Heart left ventricle (tissue), 16 donors: ENCODE measurements at regions of chr17 and their contacts with region 1.

Region 1: GRCh38 chr17:32136856-32137255 is 5.4 kb upstream of the RHOT1 start:
- DNase-seq: no peak
- ATAC-seq: peak in 1 of 4 donors; percentile 58
- H3K4me3 ChIP-seq: no peak overlapping the region
- H3K27ac ChIP-seq: no peak overlapping the region
- H3K4me1 ChIP-seq: peaks cover 0 to 27% (median 4%) of the 10 kb centered on the region in 12 donors
- H3K27me3 ChIP-seq: no peaks in the 10 kb centered on the region
- CTCF ChIP-seq: no peak
- POLR2A ChIP-seq: no peak

Region 2: DNA sequence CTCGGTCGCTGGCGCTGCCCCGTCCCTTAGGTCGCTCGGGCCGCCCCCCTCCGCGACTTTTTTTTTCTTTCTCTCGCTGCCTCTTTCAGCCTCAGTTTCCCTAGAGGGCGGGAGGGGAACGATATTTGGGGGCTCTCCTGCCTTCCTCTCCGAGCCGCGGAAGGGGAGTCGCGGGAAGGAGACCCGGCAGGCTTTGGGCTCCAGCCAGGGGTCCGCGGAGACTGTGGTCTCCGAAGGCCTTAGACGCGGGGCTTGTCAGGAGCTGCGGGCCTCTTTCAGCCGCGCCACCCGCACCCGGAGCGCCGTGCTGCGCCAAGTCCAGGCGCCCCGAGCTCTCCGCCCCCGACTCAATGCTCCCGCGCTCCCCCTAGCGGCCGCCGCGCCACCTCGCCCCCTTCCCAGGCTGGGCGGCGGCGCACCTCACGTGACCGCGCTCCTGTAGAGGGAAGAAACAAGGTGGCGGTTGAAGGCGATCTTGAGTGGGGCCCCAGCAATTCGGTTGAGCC is 129.8 kb before region 1 on chr17 and contains the start of gene LRRC37B:
- intact Hi-C with region 1: loop called in 9 of 10 experiments (anchors 2 to 10 kb)
- DNase-seq: peak; percentile 87 to 94 (median 90)
- ATAC-seq: peak; percentile 94 to 99 (median 98)
- H3K4me3 ChIP-seq: peak within 1 kb of the TSS; percentile 74 to 99 (median 82)
- H3K27ac ChIP-seq: peak within 1 kb of the TSS; percentile 62 to 92 (median 84)
- H3K4me1 ChIP-seq: peaks cover 0 to 40% (median 17%) of the 10 kb centered on the region in 12 donors
- H3K27me3 ChIP-seq: no peaks in the 10 kb centered on the region
- CTCF ChIP-seq: peak; percentile 94 to 100 (median 97)
- POLR2A ChIP-seq: peak in 1 of 2 donors; percentile 33
- total RNA-seq, gene LRRC37B: 2.3 to 10.6 (median 3.2) TPM

Region 3: GRCh38 chr17:32100971-32101631 is 35.8 kb before region 1 on chr17:
- intact Hi-C with region 1: loop called in 1 of 10 experiments (anchors 2 kb)
- DNase-seq: no peak
- ATAC-seq: peak in 3 of 4 donors; percentile 20 to 76 (median 39)
- H3K4me3 ChIP-seq: no peak overlapping the region
- H3K27ac ChIP-seq: no peak overlapping the region
- H3K4me1 ChIP-seq: peaks cover 0 to 16% (median 5%) of the 10 kb centered on the region in 12 donors
- H3K27me3 ChIP-seq: peaks cover 0 to 5% (median 0%) of the 10 kb centered on the region in 9 donors
- CTCF ChIP-seq: no peak
- POLR2A ChIP-seq: no peak